ENCODE measurements at regions of chr10 and their contacts with region 1.

Region 1: DNA sequence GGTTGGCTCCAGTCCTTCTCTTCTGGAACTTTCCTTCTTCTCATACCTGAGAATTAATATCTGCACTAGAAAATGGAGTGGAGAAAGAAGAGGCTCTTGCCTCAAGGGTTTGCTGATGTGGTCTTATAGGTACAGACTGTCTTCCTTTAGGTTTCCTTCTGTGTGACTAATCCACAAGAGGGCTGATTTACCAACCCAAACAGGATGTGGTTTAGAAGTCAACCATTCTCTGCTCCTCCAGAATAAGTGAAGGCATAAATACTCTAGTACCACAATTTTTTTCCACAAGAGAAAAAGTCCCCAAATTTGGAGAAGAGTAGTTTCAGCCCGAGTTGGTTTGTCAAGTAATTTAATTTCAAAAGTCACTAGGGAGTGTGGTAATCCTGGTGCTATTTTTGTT is 85.8 kb downstream of the NRP1 start:
- DNase-seq: peak; percentile 47
- H3K4me3 Mint-ChIP-seq: peak overlapping the region; percentile 37
- H3K27ac Mint-ChIP-seq: peak overlapping the region; percentile 54
- H3K4me1 Mint-ChIP-seq: peaks cover 75% of the 10 kb centered on the region
- H3K27me3 Mint-ChIP-seq: peaks cover 33% of the 10 kb centered on the region

Region 2: GRCh38 chr10:32958085-32959005 is 290.3 kb before region 1 on chr10 and contains the start of gene ITGB1:
- intact Hi-C with region 1: loop called (anchors 1 kb)
- DNase-seq: peak; percentile 81
- H3K4me3 Mint-ChIP-seq: peak within 1 kb of the TSS; percentile 86
- H3K27ac Mint-ChIP-seq: peak within 1 kb of the TSS; percentile 93
- H3K4me1 Mint-ChIP-seq: peaks cover 35% of the 10 kb centered on the region
- H3K27me3 Mint-ChIP-seq: peaks cover 12% of the 10 kb centered on the region
- total RNA-seq, gene ITGB1: 51.4 and 61.4 TPM in 2 replicates

Region 3: GRCh38 chr10:33143160-33143728 is 105.4 kb before region 1 on chr10:
- intact Hi-C with region 1: loop called (anchors 2 kb)
- DNase-seq: peak; percentile 31
- H3K4me3 Mint-ChIP-seq: no peak overlapping the region
- H3K27ac Mint-ChIP-seq: peak overlapping the region; percentile 70
- H3K4me1 Mint-ChIP-seq: peaks cover 49% of the 10 kb centered on the region
- H3K27me3 Mint-ChIP-seq: no peaks in the 10 kb centered on the region

Region 4: GRCh38 chr10:33258967-33259366 is 10.3 kb after region 1 on chr10:
- intact Hi-C with region 1: loop called (anchors 1 kb)
- DNase-seq: no peak
- H3K4me3 Mint-ChIP-seq: no peak overlapping the region
- H3K27ac Mint-ChIP-seq: no peak overlapping the region
- H3K4me1 Mint-ChIP-seq: peaks cover 7% of the 10 kb centered on the region
- H3K27me3 Mint-ChIP-seq: peaks cover 26% of the 10 kb centered on the region

Region 5: GRCh38 chr10:33291053-33291592 is 42.5 kb after region 1 on chr10:
- intact Hi-C with region 1: no loop called
- DNase-seq: no peak
- H3K4me3 Mint-ChIP-seq: no peak overlapping the region
- H3K27ac Mint-ChIP-seq: no peak overlapping the region
- H3K4me1 Mint-ChIP-seq: no peaks in the 10 kb centered on the region
- H3K27me3 Mint-ChIP-seq: peaks cover 7% of the 10 kb centered on the region

Region 6: GRCh38 chr10:33376976-33377657 is 128.5 kb after region 1 on chr10:
- intact Hi-C with region 1: loop called (anchors 5 kb)
- DNase-seq: no peak
- H3K4me3 Mint-ChIP-seq: no peak overlapping the region
- H3K27ac Mint-ChIP-seq: no peak overlapping the region
- H3K4me1 Mint-ChIP-seq: no peaks in the 10 kb centered on the region
- H3K27me3 Mint-ChIP-seq: peaks cover 3% of the 10 kb centered on the region

Measured in activated T-helper 1 cell treated with anti-CD3 and anti-CD28 coated beads, Interleukin-12 subunit alpha, Interleukin-12 subunit beta, Interleukin-2, Interleukin-4 antibody, amounts not matched to agents 30 ng/mL and 10 ng/mL and 1 ng/mL, durations not matched to agents 14 hours and 24 hours and 36 hours (primary cell).